ENCODE measurements at regions of chr16 and their contacts with region 1.

Region 1: GRCh38 chr16:21646721-21647561 is 5.5 kb downstream of the IGSF6 start:
- DNase-seq: peak in 8 of 9 donors; percentile 66 to 79 (median 71)
- ATAC-seq: peak; percentile 83
- H3K4me3 ChIP-seq: peak overlapping the region; percentile 57
- H3K4me3 Mint-ChIP-seq: peak overlapping the region; percentile 69 to 90 (median 81)
- H3K27ac ChIP-seq: peak overlapping the region; percentile 77
- H3K27ac Mint-ChIP-seq: peak overlapping the region; percentile 91 to 97 (median 95)
- H3K4me1 ChIP-seq: peaks cover 43 to 50% of the 10 kb centered on the region in 2 donors
- H3K4me1 Mint-ChIP-seq: peaks cover 26 to 69% (median 56%) of the 10 kb centered on the region in 7 donors
- H3K27me3 ChIP-seq: no peaks in the 10 kb centered on the region
- H3K27me3 Mint-ChIP-seq: no peaks in the 10 kb centered on the region

Region 2: DNA sequence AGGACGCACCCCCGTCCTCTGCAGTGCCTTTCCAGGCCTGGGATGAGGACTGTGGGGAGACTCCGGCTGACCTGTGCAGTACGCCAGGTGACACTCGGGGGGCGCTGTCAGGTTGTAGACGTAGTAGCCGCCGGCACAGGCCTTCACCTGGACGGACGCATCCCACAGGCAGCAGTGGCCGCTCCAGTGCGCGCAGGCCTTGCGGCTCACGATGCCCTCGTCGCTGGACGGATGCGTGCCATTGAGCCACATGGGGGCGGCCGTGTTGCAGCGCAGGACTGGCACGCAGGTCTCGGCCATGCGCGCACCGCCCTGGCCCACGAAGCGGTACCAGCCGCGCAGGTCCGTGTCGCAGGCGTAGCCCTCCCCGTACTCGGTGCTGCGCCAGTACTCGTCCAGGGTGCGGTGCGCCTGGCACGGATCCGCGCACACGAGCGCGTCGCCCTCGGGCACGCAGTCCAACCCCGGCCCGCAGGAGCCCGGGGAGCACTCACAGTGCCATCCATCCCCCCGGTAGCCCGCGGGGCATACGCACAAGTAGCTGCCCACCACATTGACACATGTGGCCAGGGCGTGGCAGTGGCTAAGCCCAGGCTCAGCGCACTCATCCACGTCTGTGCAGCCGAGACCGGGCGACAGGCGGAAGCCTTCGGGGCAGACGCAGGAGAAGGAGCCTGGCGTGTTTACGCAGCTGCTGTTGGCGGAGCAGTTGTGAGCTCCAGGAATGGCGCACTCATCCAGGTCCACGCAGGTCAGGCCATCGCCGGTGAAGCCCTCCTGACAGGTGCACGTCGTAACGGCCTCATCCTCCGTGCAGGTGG is 1298.4 kb before region 1 on chr16:
- CTCF ChIA-PET with region 1: no interaction called
- POLR2A ChIA-PET with region 1: no interaction called
- intact Hi-C with region 1: no loop called
- DNase-seq: no peak
- ATAC-seq: no peak
- H3K4me3 ChIP-seq: no peak overlapping the region
- H3K4me3 Mint-ChIP-seq: no peak overlapping the region
- H3K27ac ChIP-seq: no peak overlapping the region
- H3K27ac Mint-ChIP-seq: no peak overlapping the region
- H3K4me1 ChIP-seq: no peaks in the 10 kb centered on the region
- H3K4me1 Mint-ChIP-seq: no peaks in the 10 kb centered on the region
- H3K27me3 ChIP-seq: no peaks in the 10 kb centered on the region
- H3K27me3 Mint-ChIP-seq: peaks cover 0 to 31% (median 4%) of the 10 kb centered on the region in 5 donors

Region 3: GRCh38 chr16:21523411-21524067 is 123.4 kb before region 1 on chr16:
- CTCF ChIA-PET with region 1: no interaction called
- POLR2A ChIA-PET with region 1: no interaction called
- intact Hi-C with region 1: loop called in 1 of 2 experiments (anchors 10 kb)
- DNase-seq: no peak
- ATAC-seq: no peak
- H3K4me3 ChIP-seq: no peak overlapping the region
- H3K4me3 Mint-ChIP-seq: peak overlapping the region in 2 of 10 donors; percentile 29 to 56
- H3K27ac ChIP-seq: no peak overlapping the region
- H3K27ac Mint-ChIP-seq: no peak overlapping the region
- H3K4me1 ChIP-seq: no peaks in the 10 kb centered on the region
- H3K4me1 Mint-ChIP-seq: peaks cover 2 to 9% (median 6%) of the 10 kb centered on the region in 7 donors
- H3K27me3 ChIP-seq: no peaks in the 10 kb centered on the region
- H3K27me3 Mint-ChIP-seq: peaks cover 0 to 7% (median 0%) of the 10 kb centered on the region in 5 donors

Region 4: DNA sequence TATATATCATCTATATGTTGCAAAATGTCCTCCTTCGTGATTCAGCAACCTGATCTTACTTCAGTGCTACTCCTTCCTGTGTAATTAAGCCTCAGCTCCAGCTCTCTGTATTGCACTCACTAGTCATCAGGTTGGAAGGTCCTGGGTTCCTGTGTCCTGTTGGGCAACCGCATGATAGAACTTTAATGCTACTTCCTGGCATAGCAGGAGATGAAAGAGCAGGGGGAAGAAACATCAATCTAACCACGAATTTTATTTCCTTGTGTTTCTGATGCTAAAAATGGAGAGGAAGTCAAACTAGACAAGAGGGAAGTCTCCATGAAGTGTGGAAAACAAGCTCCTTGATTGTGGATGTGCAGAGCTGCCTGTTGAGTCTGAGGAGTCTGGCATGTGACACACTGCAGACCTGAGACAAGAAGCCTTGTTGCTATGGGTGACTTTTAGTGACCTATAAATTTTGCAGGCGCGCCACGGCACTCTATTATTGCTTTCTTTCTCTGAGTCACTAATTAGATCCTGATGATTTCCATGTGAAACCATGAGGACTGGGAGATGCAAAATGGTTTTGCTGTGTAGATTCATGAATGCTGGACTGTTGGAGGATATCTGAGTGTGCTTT is 20.2 kb before region 1 on chr16:
- CTCF ChIA-PET with region 1: interaction called, 3 read pairs
- POLR2A ChIA-PET with region 1: interaction called, 4 read pairs
- intact Hi-C with region 1: loop called in 1 of 2 experiments (anchors 2 kb)
- DNase-seq: no peak
- ATAC-seq: peak; percentile 92
- H3K4me3 ChIP-seq: peak overlapping the region; percentile 2
- H3K4me3 Mint-ChIP-seq: peak overlapping the region; percentile 30 to 67 (median 52)
- H3K27ac ChIP-seq: no peak overlapping the region
- H3K27ac Mint-ChIP-seq: peak overlapping the region; percentile 62 to 84 (median 66)
- H3K4me1 ChIP-seq: peaks cover 15% of the 10 kb centered on the region in 2 donors
- H3K4me1 Mint-ChIP-seq: peaks cover 15 to 51% (median 41%) of the 10 kb centered on the region in 7 donors
- H3K27me3 ChIP-seq: no peaks in the 10 kb centered on the region
- H3K27me3 Mint-ChIP-seq: no peaks in the 10 kb centered on the region

Region 5: DNA sequence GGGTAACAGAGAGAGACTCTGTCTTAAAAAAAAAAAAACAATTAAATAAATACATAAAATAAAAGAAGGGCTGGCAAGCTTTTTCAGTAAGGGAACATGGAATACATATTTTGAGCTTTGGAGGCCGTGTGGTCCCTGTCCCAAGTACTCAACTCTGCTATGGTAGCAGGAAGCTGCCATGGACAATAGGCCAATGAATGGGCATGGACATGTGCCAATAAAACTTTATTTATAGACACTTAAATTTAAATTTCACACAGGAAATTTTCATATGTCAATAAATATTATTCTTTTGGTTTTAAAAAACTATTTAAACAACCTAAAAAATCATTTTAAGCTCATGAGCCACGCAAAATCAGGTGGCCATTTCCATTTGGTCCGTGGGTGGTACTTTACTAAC is 20.6 kb after region 1 on chr16:
- CTCF ChIA-PET with region 1: no interaction called
- POLR2A ChIA-PET with region 1: no interaction called
- intact Hi-C with region 1: no loop called
- DNase-seq: no peak
- ATAC-seq: no peak
- H3K4me3 ChIP-seq: no peak overlapping the region
- H3K4me3 Mint-ChIP-seq: no peak overlapping the region
- H3K27ac ChIP-seq: no peak overlapping the region
- H3K27ac Mint-ChIP-seq: no peak overlapping the region
- H3K4me1 ChIP-seq: no peaks in the 10 kb centered on the region
- H3K4me1 Mint-ChIP-seq: peaks cover 0 to 9% (median 4%) of the 10 kb centered on the region in 7 donors
- H3K27me3 ChIP-seq: no peaks in the 10 kb centered on the region
- H3K27me3 Mint-ChIP-seq: peaks cover 0 to 44% (median 4%) of the 10 kb centered on the region in 5 donors

Region 6: GRCh38 chr16:21708533-21709115 is 61.7 kb after region 1 on chr16:
- CTCF ChIA-PET with region 1: interaction called, 19 read pairs
- POLR2A ChIA-PET with region 1: interaction called, 4 read pairs
- intact Hi-C with region 1: loop called in 1 of 2 experiments (anchors 5 kb)
- DNase-seq: peak; percentile 51 to 87 (median 79)
- ATAC-seq: peak; percentile 86
- H3K4me3 ChIP-seq: no peak overlapping the region
- H3K4me3 Mint-ChIP-seq: no peak overlapping the region
- H3K27ac ChIP-seq: no peak overlapping the region
- H3K27ac Mint-ChIP-seq: peak overlapping the region in 2 of 9 donors; percentile 53 to 59
- H3K4me1 ChIP-seq: peaks cover 0 to 3% of the 10 kb centered on the region in 2 donors
- H3K4me1 Mint-ChIP-seq: peaks cover 0 to 4% (median 3%) of the 10 kb centered on the region in 7 donors
- H3K27me3 ChIP-seq: no peaks in the 10 kb centered on the region
- H3K27me3 Mint-ChIP-seq: no peaks in the 10 kb centered on the region

Region 7: DNA sequence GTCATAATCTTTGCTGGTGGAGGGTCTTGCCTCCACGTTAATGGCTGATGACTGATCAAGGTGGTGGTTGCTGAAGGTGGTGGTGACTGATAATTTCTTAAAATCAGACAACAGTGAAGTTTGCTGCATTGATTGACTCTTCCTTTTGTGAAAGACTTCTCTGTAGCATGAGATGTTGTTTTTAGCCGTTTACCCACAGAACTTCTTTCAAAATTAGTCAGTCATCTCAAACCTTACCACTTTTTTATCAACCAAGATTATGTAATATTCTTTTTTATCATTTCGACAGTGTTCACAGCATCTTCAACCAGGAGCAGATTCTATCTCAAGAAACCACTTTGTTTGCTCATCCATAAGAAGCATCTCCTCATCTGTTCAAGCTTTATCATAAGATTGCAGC is 312.1 kb after region 1 on chr16:
- CTCF ChIA-PET with region 1: no interaction called
- POLR2A ChIA-PET with region 1: no interaction called
- intact Hi-C with region 1: no loop called
- DNase-seq: no peak
- ATAC-seq: peak; percentile 41
- H3K4me3 ChIP-seq: no peak overlapping the region
- H3K4me3 Mint-ChIP-seq: no peak overlapping the region
- H3K27ac ChIP-seq: no peak overlapping the region
- H3K27ac Mint-ChIP-seq: peak overlapping the region in 2 of 9 donors; percentile 9 to 29
- H3K4me1 ChIP-seq: peaks cover 10% of the 10 kb centered on the region in 2 donors
- H3K4me1 Mint-ChIP-seq: peaks cover 23 to 42% (median 30%) of the 10 kb centered on the region in 7 donors
- H3K27me3 ChIP-seq: no peaks in the 10 kb centered on the region
- H3K27me3 Mint-ChIP-seq: no peaks in the 10 kb centered on the region

Region 8: DNA sequence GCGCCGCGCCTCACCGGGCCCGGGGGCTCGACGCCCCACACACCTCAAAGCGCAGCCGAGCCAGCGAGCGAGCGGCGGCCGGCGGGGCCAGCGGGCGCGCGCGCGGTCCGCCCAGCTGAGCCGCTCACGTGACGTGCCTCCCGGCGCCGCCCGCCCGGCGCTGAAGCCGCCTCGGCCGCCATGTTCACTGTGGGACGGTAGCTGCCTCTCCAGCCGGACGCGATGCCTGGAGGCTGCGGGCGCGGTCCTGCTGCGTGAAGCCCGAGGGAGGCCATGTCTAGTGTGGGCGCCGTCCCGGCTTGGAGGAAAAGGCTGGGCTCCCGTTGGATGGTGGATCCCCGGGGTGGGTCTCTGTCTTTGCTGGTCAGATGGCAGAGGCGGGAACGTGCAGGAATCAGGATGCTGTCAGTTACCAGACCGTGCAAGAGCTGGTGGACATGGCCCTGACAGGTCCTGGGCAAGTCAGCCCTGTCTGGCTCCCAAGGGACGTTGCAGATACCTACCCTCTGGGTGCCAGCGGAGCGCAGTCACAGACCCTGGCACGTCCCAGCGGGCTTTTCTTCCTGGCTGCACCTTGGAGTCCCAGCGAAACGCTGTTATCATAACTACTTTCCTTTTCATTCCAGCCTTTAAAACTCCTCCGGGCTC is 1502.5 kb after region 1 on chr16 and contains the start of gene USP31:
- CTCF ChIA-PET with region 1: no interaction called
- POLR2A ChIA-PET with region 1: no interaction called
- intact Hi-C with region 1: loop called in 1 of 2 experiments (anchors 2 kb)
- DNase-seq: peak; percentile 77 to 89 (median 85)
- ATAC-seq: peak; percentile 97
- H3K4me3 ChIP-seq: peak within 1 kb of the TSS; percentile 93
- H3K4me3 Mint-ChIP-seq: peak within 1 kb of the TSS; percentile 92 to 98 (median 96)
- H3K27ac ChIP-seq: peak within 1 kb of the TSS; percentile 53
- H3K27ac Mint-ChIP-seq: peak within 1 kb of the TSS; percentile 37 to 92 (median 81)
- H3K4me1 ChIP-seq: peaks cover 0 to 6% of the 10 kb centered on the region in 2 donors
- H3K4me1 Mint-ChIP-seq: peaks cover 12 to 25% (median 22%) of the 10 kb centered on the region in 7 donors
- H3K27me3 ChIP-seq: no peaks in the 10 kb centered on the region
- H3K27me3 Mint-ChIP-seq: peaks cover 0 to 12% (median 5%) of the 10 kb centered on the region in 5 donors
- total RNA-seq, gene USP31: 2.7 to 6.0 (median 4.1) TPM

Measured in naive thymus-derived CD4-positive, alpha-beta T cell (primary cell).